MCF 10A (cell line): ENCODE measurements at regions of chr20 and their contacts with region 1.

Region 1: GRCh38 chr20:31738729-31739561 is at the start of gene TPX2:
- DNase-seq: peak; percentile 98
- H3K4me3 Mint-ChIP-seq: no peak within 1 kb of the TSS
- H3K27ac Mint-ChIP-seq: no peak within 1 kb of the TSS
- H3K4me1 Mint-ChIP-seq: no peaks in the 10 kb centered on the region
- H3K27me3 Mint-ChIP-seq: no peaks in the 10 kb centered on the region
- CTCF ChIP-seq: no peak
- total RNA-seq, gene TPX2: 45.3 and 79.6 TPM in 2 replicates

Region 2: GRCh38 chr20:31595654-31596411 is 143.1 kb before region 1 on chr20:
- CTCF ChIA-PET with region 1: interaction called, 3 read pairs
- POLR2A ChIA-PET with region 1: interaction called, 10 read pairs
- intact Hi-C with region 1: no loop called
- DNase-seq: peak; percentile 92
- H3K4me3 Mint-ChIP-seq: peak overlapping the region; percentile 43
- H3K27ac Mint-ChIP-seq: peak overlapping the region; percentile 94
- H3K4me1 Mint-ChIP-seq: peaks cover 28% of the 10 kb centered on the region
- H3K27me3 Mint-ChIP-seq: no peaks in the 10 kb centered on the region
- CTCF ChIP-seq: no peak

Region 3: DNA sequence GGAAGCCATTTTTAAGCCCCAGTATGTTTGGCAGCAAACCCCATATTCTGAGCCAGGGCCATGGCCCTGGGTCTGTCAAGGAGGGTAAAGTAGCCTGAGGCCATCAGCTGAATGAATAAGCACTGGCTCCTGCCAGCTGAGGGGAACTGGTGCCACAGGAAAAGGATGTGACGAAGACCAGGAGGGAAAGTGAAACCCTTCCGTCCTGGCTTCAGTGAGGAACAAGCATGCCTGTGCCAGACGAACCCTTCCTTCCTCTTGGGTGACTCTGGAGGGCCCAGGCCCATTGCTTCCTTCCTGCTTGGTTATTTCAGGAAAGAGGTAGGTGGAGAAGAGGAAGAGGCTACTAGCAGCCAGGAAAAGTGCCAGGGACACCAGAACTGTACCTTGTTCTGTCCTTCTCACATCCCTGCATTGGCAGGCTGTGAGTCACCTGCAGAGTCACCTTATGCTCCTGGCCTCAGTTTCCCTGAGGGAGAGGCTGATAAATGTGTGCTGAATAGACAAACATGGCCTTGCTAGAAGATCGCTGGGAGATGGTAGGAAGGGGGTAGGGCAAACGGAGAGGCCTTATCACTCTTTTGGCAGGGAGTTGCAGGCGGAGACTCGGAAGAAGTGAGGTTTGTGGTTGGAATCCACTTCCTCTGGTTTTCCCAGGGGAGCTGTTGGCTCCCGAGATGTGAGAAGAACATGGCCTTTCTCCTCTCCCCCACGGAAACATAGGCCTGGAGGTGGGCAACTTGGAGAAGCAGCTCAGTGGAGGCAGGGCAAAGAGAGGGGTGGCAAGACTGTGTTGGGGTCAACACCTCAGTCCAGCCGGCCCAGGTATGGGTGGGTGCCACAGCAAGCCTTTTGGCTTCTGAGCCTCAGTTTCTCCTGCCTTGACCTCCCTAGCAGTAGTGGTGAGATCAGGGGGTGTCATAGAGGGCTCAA is 63.8 kb before region 1 on chr20:
- CTCF ChIA-PET with region 1: interaction called, 4 read pairs
- POLR2A ChIA-PET with region 1: interaction called, 15 read pairs
- intact Hi-C with region 1: no loop called
- DNase-seq: peak; percentile 83
- H3K4me3 Mint-ChIP-seq: peak overlapping the region; percentile 63
- H3K27ac Mint-ChIP-seq: peak overlapping the region; percentile 60
- H3K4me1 Mint-ChIP-seq: peaks cover 51% of the 10 kb centered on the region
- H3K27me3 Mint-ChIP-seq: no peaks in the 10 kb centered on the region
- CTCF ChIP-seq: no peak

Region 4: DNA sequence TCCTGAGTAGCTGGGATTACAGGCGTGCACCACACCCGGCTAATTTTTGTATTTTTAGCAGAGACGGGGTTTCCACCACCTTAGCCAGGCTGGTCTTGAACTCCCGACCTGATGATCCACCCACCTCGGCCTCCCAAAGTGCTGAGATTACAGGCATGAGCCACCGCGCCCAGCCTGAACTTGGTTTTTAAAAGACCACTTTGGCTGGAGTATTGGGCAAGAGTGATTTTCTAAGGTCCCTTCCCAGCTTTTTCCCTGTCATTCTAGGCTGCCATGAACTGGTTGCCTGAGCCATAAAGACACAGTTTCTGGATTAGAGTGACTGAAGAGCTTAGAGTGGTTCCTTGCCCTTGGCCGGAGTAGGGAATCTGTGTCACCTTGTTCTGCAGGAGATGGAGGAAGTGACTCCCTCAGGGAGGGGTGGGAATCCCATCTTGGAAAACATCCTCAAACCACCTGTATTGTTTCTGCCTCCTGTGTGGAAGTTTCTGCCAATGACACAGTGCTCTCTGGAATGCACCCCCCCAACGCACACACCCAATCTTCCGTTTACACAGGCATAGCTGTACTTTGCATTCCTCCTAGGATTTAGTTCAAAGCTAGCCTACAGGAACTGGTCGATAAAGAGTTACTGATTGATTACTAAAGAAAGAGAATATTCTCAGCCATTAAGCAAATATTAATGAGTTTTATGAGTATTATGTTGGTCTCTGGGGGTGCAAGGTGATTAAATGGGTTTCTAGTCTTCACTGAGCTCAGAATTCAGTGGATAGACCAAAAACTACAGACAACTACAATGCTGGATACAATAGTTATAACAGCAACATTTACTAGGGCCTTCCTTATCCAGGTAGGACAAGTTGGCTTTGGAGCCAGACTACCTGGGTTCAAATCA is 34.5 kb before region 1 on chr20:
- CTCF ChIA-PET with region 1: no interaction called
- POLR2A ChIA-PET with region 1: interaction called, 55 read pairs
- intact Hi-C with region 1: no loop called
- DNase-seq: peak; percentile 84
- H3K4me3 Mint-ChIP-seq: peak overlapping the region; percentile 7
- H3K27ac Mint-ChIP-seq: peak overlapping the region; percentile 92
- H3K4me1 Mint-ChIP-seq: peaks cover 58% of the 10 kb centered on the region
- H3K27me3 Mint-ChIP-seq: no peaks in the 10 kb centered on the region
- CTCF ChIP-seq: no peak

Region 5: GRCh38 chr20:31751126-31751525 is 12.2 kb after region 1 on chr20:
- CTCF ChIA-PET with region 1: interaction called, 13 read pairs
- POLR2A ChIA-PET with region 1: interaction called, 81 read pairs
- intact Hi-C with region 1: no loop called
- DNase-seq: no peak
- H3K4me3 Mint-ChIP-seq: no peak overlapping the region
- H3K27ac Mint-ChIP-seq: peak overlapping the region; percentile 70
- H3K4me1 Mint-ChIP-seq: peaks cover 22% of the 10 kb centered on the region
- H3K27me3 Mint-ChIP-seq: no peaks in the 10 kb centered on the region
- CTCF ChIP-seq: no peak

Region 6: GRCh38 chr20:32574296-32575226 is 835.6 kb after region 1 on chr20:
- CTCF ChIA-PET with region 1: no interaction called
- POLR2A ChIA-PET with region 1: no interaction called
- intact Hi-C with region 1: no loop called
- DNase-seq: peak; percentile 77
- H3K4me3 Mint-ChIP-seq: no peak overlapping the region
- H3K27ac Mint-ChIP-seq: no peak overlapping the region
- H3K4me1 Mint-ChIP-seq: no peaks in the 10 kb centered on the region
- H3K27me3 Mint-ChIP-seq: no peaks in the 10 kb centered on the region
- CTCF ChIP-seq: no peak